ENCODE measurements at regions of chr20 and their contacts with region 1.

Region 1: GRCh38 chr20:3156811-3157619 is 2.6 kb downstream of the FASTKD5 start:
- DNase-seq: no peak
- H3K4me3 ChIP-seq: peak overlapping the region; percentile 17
- H3K27ac ChIP-seq: no peak overlapping the region
- H3K4me1 ChIP-seq: peaks cover 44% of the 10 kb centered on the region
- CTCF ChIP-seq: no peak

Region 2: GRCh38 chr20:3204124-3204822 is 47.3 kb after region 1 on chr20 and contains the start of gene DDRGK1:
- CTCF ChIA-PET with region 1: no interaction called
- POLR2A ChIA-PET with region 1: interaction called, 3 read pairs
- intact Hi-C with region 1: loop called (anchors 5 kb)
- DNase-seq: peak; percentile 86
- H3K4me3 ChIP-seq: peak within 1 kb of the TSS; percentile 92
- H3K27ac ChIP-seq: peak within 1 kb of the TSS; percentile 73
- H3K4me1 ChIP-seq: peaks cover 17% of the 10 kb centered on the region
- CTCF ChIP-seq: no peak
- total RNA-seq, gene DDRGK1: 35.5 and 37.7 TPM in 2 replicates

Measured in OCI-LY7 (cell line).